Right cardiac atrium (tissue), 5 donors: ENCODE measurements at regions of chr9 and their contacts with region 1.

Region 1: DNA sequence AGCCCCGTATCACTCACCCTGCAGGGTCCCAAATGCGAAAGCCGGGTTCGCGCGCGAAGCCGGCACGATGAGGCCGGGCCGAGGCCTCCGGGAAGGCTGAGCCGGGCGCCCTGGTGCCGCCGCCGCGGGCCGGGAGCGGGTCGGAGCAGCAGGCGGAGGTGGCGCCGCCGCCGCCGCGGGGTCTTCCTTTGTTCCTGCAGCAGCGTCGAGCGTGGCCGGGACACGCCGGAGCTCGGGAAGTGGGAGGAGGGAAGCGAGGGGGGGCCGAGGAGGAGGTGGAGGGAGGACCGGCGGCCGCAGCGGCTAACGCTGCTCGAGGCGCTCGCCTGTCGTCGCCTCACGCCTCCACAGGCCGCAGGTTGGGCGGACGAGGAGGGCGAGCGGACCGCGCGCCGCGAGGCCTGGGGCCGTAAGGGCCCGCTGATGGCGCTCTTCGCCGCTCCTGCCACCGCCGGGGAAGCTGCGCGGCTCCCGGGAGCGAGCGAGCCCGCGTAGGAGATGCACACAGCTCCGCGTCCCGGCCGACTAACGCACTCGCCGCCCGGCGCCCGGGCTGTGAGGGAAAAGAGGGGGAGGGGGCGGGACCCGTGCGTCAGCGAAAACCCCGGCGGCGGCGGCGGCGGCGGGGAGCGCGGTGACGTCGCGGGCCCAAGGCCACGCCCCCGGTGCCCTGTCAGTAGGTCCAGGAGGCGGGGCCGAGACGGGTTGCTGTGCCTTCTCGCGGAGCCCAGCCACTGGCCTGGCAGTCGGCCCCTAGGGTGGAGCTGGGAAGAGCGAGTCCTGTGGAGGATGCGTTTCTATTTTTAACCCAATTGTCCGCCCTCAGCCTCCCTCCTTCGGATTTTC is at the start of gene ZFAND5:
- DNase-seq: peak; percentile 99 to 100 (median 100)
- ATAC-seq: peak; percentile 98
- H3K4me3 ChIP-seq: peak within 1 kb of the TSS; percentile 91
- H3K27ac ChIP-seq: peak within 1 kb of the TSS; percentile 100
- H3K4me1 ChIP-seq: no peaks in the 10 kb centered on the region
- H3K27me3 ChIP-seq: no peaks in the 10 kb centered on the region
- total RNA-seq, gene ZFAND5: 148 to 219 (median 169) TPM

Region 2: DNA sequence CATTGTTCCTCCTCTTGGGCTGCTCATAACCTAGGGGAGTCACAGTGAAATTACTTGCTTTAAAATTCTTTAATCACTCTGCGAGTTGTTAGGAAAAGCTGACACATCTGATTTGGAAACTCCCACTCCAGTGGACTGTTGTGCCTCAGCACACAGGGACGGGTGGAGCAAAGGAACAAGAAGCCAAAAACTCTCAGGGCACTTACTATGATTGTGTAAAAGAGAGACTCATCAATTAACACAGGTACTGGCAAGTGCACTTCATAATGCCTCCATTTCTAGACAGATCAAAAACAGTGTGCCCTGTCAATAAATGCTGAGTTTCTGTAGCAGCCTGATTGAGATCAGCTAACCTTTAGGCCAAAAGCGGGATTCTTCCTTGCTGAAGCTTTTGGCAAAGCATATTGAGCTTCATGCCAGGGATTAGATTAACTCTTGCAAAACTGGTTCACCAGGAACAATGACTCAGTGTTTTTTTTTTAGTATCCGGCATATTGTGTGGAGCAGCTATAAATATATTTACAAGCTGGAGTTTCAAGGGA is 212.4 kb after region 1 on chr9:
- intact Hi-C with region 1: loop called in 3 of 4 experiments (anchors 2 to 10 kb)
- DNase-seq: peak in 1 of 3 donors; percentile 23
- ATAC-seq: peak; percentile 85 to 87
- H3K4me3 ChIP-seq: peak overlapping the region; percentile 7
- H3K27ac ChIP-seq: peak overlapping the region; percentile 87
- H3K4me1 ChIP-seq: peaks cover 2% of the 10 kb centered on the region
- H3K27me3 ChIP-seq: no peaks in the 10 kb centered on the region

Region 3: GRCh38 chr9:72586388-72587130 is 221.7 kb after region 1 on chr9:
- intact Hi-C with region 1: loop called in 2 of 4 experiments (anchors 10 kb)
- DNase-seq: no peak
- ATAC-seq: peak; percentile 61 to 78
- H3K4me3 ChIP-seq: no peak overlapping the region
- H3K27ac ChIP-seq: no peak overlapping the region
- H3K4me1 ChIP-seq: peaks cover 2% of the 10 kb centered on the region
- H3K27me3 ChIP-seq: no peaks in the 10 kb centered on the region